Activated CD4-positive, alpha-beta T cell treated with anti-CD3 and anti-CD28 coated beads, Interleukin-2, amount 10 ng/mL, durations not matched to agents 24 days and 14 days (primary cell): ENCODE measurements at regions of chr18 and their contacts with region 1.

Region 1: DNA sequence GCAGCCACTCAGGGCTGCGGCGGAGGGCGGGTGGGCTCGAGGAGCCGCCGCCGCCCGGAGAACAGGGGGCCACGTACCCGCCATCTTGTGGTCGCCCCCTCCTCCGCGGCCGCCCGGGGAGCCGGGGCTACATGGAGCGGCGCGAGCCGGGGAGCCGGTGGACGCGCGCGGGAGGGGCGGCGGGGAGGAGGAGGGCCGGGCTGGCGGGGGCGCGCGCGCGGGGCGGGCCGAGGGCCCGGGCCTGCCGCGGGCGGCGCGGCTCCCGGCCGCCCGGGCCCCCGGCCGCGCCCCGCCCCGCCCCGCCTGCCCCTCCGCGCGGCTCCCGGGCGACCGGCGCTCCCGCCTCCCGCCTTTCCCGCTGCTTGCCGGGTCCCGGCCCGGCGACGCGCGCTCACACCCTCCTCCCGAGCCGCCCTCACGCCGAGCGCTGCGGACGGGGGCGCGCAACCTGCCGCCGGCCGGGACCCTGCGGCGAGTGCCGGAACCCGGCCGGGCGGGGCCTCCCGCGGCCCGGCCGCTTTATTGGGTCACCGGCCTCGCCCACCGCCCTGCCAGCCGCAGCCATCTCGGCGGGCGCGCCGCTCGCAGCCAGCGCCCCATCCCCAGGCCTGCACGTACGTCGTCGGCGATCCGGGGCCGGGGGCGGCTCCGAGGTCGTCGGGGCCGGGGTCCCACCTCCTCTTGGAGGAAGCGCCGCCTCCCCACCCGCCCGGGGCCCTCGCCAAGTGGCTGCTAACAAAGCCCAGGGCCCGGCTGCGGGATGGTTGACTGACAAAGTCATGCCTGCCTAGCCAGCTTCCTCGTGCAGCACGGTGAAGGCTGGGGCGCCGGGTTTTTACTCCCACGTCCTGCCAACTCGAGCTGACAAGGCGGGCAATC is at the start of gene PPP4R1:
- DNase-seq: peak; percentile 90
- H3K4me3 Mint-ChIP-seq: peak within 1 kb of the TSS; percentile 94
- H3K27ac Mint-ChIP-seq: peak within 1 kb of the TSS; percentile 89
- H3K4me1 Mint-ChIP-seq: peaks cover 38% of the 10 kb centered on the region
- H3K27me3 Mint-ChIP-seq: peaks cover 1% of the 10 kb centered on the region
- total RNA-seq, gene PPP4R1: 52.8 and 56.0 TPM in 2 replicates

Region 2: DNA sequence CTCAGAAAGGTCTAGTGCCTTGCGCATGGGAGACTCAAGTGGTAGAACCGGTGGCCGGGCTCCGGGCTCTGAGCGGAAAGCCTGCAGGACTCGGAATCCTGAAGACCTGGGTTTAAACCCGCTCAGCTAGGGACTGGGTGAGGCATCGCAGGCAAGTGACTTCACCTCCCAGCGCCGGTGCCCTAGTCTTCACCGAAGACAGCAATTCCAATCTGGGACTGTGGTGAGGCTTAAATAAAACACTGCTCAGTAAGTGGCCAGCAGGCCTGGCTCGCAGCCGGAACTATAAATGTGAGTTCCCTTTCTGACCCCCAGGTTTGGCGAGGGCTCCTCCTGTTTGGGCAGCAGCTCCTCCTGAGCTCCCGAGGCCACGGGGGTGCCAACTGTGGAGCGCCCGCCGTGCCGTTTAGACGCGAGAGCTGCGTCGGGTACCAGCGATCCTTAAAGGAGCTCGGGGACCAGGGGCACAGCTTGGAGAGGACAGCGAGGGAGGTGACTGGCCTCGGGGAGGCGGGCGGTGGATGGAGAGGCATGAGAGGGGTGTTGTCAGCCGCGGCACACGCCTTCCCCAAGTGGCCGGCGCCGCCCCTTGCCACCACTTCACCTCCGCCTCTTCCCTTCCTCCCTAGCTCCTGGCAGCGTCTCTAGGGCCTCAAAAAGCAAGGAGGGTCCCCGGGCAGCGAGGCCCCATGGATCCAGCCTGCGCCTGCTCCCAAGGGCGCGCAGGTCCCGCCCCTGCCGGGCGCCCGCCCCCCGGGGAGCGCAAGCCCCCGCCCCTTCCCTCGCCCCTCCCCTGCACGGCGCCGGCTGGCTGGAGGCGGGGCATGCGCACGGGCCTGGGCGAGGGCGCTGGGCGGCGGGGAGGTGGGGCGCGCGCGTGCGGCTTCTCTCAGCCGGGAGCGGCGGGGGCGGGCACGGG is 910.0 kb before region 1 on chr18:
- intact Hi-C with region 1: loop called (anchors 5 kb)
- DNase-seq: peak; percentile 96
- H3K4me3 Mint-ChIP-seq: peak overlapping the region; percentile 95
- H3K27ac Mint-ChIP-seq: peak overlapping the region; percentile 72
- H3K4me1 Mint-ChIP-seq: peaks cover 9% of the 10 kb centered on the region
- H3K27me3 Mint-ChIP-seq: peaks cover 69% of the 10 kb centered on the region

Region 3: GRCh38 chr18:9136315-9137155 is 478.1 kb before region 1 on chr18 and contains the start of gene ANKRD12:
- intact Hi-C with region 1: loop called (anchors 2 kb)
- DNase-seq: peak; percentile 100
- H3K4me3 Mint-ChIP-seq: peak within 1 kb of the TSS; percentile 94
- H3K27ac Mint-ChIP-seq: peak within 1 kb of the TSS; percentile 99
- H3K4me1 Mint-ChIP-seq: peaks cover 54% of the 10 kb centered on the region
- H3K27me3 Mint-ChIP-seq: no peaks in the 10 kb centered on the region
- total RNA-seq, gene ANKRD12: 60.8 TPM in 2 replicates

Region 4: DNA sequence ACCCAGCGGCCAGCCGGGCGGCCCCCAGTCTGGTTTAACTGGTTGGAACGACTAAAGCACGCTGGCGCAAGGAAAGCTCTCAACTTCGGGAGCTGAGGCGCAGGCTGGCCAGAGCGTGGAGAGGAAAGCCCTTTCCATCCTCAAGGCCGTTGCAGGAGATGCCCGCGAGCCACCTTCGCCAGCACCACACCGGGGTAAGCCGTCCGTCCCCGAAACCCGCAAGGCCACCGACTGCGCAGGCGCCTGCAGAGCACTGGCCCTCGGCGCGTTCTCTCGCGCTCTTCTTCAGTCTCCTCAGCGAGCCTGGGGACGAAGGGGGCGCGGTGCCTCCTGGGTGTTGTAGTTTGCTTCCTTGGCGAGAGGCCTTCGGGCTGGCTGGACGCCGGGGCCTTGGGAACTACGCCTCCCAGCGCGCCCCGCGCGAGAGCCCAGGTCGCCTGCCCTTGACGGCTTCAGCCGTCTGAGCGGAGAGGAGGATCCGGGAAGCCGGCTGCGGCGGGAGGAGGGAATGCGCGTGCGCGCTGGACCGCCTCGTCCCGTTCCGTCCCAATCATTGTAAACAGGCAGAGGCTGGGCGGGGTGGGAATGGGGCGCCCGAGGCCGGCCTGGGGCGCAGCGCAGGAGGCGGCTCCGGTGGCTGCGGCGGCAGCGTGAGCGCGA is 139.5 kb before region 1 on chr18 and contains the start of gene RALBP1:
- intact Hi-C with region 1: loop called (anchors 1 kb)
- DNase-seq: peak; percentile 100
- H3K4me3 Mint-ChIP-seq: peak within 1 kb of the TSS; percentile 83
- H3K27ac Mint-ChIP-seq: peak within 1 kb of the TSS; percentile 96
- H3K4me1 Mint-ChIP-seq: peaks cover 25% of the 10 kb centered on the region
- H3K27me3 Mint-ChIP-seq: peaks cover 12% of the 10 kb centered on the region
- total RNA-seq, gene RALBP1: 38.9 and 41.3 TPM in 2 replicates

Region 5: DNA sequence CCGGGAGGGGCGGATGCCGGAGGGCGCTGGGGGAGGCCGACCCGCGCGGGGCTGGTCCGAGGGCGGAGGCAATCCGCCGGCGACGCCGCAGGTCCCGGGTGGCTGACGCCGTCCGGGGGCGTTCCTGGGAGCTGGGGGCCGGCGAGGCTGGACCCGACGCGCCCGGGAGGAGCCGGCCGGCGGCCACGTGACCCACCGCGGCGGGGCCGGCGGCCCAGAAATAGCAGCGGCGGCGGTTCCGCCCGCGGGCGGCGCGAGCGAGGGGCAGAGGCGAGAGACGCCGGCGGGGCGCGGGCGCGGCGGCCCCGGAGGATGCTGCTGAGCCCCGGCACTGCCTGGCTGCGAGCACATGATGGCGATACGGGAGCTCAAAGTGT is 93.4 kb after region 1 on chr18 and contains the start of gene RAB31:
- intact Hi-C with region 1: loop called (anchors 5 kb)
- DNase-seq: peak; percentile 67
- H3K4me3 Mint-ChIP-seq: peak within 1 kb of the TSS; percentile 80
- H3K27ac Mint-ChIP-seq: no peak within 1 kb of the TSS
- H3K4me1 Mint-ChIP-seq: peaks cover 20% of the 10 kb centered on the region
- H3K27me3 Mint-ChIP-seq: peaks cover 77% of the 10 kb centered on the region
- total RNA-seq, gene RAB31: 0.66 TPM in 1 of 2 replicates, not detected in the other

Region 6: DNA sequence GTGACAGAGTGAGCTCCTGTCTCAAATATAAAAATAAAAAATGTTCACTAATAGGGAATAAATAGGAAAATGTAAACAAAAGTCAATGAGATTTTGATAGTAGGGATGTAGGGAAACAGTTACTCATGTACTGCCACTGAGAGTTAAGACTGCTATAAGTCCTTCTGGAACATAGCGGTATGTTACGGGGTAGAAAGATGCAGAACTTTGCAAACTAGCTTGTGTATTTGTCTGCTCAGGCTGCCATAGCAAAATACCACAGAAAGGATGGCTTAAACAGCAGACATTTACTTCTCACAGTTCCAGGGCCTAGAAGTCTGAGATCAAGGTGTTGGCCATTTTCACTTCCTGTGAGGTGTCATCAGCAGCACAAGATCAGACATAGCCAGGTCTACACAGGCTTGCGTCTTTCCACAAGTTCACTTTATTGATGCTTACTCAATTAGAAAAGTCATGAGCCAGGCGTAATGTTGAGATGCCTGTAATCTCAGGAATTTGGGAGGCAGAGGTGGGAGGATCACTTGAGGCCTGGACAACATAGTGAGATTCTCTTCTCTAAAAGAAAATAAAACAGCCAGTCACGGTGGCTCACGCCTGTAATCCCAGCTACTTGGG is 279.9 kb after region 1 on chr18:
- intact Hi-C with region 1: no loop called
- DNase-seq: no peak
- H3K4me3 Mint-ChIP-seq: no peak overlapping the region
- H3K27ac Mint-ChIP-seq: no peak overlapping the region
- H3K4me1 Mint-ChIP-seq: peaks cover 18% of the 10 kb centered on the region
- H3K27me3 Mint-ChIP-seq: no peaks in the 10 kb centered on the region

Region 7: DNA sequence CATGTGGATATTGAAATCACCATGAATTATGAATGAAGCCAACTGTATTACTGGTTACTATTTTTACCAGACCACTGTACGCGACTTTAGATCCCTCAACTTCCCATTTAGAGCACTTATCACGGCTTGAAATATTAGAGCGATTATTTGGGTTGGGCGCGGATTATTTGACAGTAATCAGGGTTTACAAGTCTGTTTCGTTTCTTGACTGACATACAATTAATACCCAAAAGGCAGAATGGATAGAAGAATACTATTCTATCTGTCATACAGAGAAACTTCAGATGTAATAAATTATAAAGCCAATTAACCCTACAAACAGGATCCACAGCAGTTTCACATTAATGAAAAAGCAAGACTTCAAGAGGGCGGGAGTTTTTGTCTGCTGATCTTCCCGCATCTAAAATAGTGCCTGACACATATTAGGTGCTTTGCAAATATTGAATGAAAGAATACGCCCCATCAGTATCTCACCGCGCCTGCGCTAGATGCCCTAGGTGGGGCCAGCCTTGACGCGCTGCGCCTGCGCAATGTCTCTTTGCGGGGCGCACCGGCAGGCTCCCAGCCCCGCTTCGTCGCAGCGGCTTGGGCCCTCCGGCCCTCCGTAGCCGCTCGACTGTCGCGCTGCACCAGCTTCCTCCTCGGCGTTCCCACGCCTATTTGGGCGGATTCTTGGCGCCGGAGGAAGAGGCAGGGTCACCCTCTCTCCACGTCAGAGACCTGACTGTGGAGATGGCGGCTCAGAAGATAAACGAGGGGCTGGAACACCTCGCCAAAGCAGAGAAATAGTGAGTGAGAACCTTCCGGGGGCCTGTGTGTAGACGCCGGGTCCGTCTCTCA is 911.0 kb after region 1 on chr18 and contains the start of gene NAPG:
- intact Hi-C with region 1: loop called (anchors 5 kb)
- DNase-seq: peak; percentile 98
- H3K4me3 Mint-ChIP-seq: peak within 1 kb of the TSS; percentile 96
- H3K27ac Mint-ChIP-seq: peak within 1 kb of the TSS; percentile 98
- H3K4me1 Mint-ChIP-seq: peaks cover 41% of the 10 kb centered on the region
- H3K27me3 Mint-ChIP-seq: peaks cover 8% of the 10 kb centered on the region
- total RNA-seq, gene NAPG: 36.4 and 38.7 TPM in 2 replicates